ENCODE measurements at regions of chr17 and their contacts with region 1.

Region 1: GRCh38 chr17:29931231-29931932 is 1.4 kb upstream of the SSH2 start:
- DNase-seq: peak; percentile 48 to 80 (median 58)
- ATAC-seq: peak; percentile 66
- H3K4me3 ChIP-seq: no peak overlapping the region
- H3K4me1 ChIP-seq: peaks cover 18% of the 10 kb centered on the region
- CTCF ChIP-seq: peak; percentile 82

Region 2: DNA sequence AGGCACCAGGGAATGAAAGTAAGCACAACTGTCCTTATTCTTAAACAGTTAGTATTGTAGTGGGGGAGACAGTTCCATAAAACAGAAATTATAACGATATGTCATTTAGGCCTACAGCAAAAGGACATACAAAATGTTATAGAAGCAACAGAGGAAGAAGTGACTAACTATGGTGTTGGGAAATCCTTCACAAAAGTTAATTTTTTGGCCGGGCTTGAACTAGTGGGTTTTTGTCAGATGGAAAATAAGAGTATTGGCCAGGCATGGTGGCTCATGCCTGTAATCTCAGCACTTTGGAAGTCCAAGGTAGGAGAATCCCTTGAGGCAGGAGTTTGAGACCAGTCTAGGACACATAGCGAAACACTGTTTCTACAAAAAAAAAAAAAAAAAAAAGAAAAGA is 129.1 kb before region 1 on chr17:
- intact Hi-C with region 1: loop called in 1 of 2 experiments (anchors 5 kb)
- DNase-seq: no peak
- ATAC-seq: no peak
- H3K4me3 ChIP-seq: no peak overlapping the region
- H3K4me1 ChIP-seq: no peaks in the 10 kb centered on the region
- CTCF ChIP-seq: no peak

Region 3: DNA sequence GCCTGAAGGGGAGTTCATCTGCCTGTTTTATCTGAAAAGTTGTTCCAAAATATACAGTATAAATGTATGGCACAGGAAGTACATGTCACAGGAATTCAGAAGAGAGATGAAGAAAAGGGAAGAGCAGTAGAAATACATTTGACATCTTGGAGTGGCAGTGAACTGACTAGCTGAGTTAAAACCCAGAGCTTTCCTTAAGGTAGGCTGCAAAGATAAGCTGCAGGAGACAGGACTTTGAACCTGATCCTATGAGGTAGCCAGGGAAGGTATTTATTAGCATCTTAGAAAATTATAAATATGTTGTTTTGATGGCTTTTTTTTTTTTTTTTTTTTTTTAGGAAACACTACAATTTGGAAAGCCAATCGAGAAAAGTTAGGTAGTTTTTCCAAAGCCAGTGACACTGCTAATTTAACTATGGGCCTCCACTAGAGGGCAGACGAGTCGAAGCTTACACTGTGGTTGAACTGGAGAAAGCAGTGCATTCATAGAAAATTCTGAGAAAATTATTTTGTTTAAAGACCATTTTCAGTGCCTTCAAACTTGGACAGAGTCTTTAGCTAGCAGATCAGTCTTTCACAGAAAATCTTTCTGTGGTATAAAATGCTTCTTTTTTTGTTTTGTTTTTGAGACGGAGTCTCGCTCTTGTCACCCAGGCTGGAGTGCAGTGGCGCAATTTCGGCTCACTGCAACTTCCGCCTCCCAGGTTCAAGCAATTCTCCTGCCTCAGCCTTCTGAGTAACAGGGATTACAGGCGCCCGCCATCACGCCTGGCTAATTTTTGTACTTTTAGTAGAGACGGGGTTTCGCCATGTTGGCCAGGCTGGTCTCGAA is 123.6 kb before region 1 on chr17:
- intact Hi-C with region 1: loop called (anchors 2 to 5 kb)
- DNase-seq: peak in 2 of 3 donors; percentile 53 to 88
- ATAC-seq: peak; percentile 90
- H3K4me3 ChIP-seq: no peak overlapping the region
- H3K4me1 ChIP-seq: no peaks in the 10 kb centered on the region
- CTCF ChIP-seq: peak; percentile 34

Region 4: GRCh38 chr17:30035369-30035768 is 104.0 kb after region 1 on chr17:
- intact Hi-C with region 1: no loop called
- DNase-seq: no peak
- ATAC-seq: no peak
- H3K4me3 ChIP-seq: no peak overlapping the region
- H3K4me1 ChIP-seq: no peaks in the 10 kb centered on the region
- CTCF ChIP-seq: no peak

Measured in mucosa of descending colon (tissue), 3 donors.